ENCODE measurements at regions of chr2 and their contacts with region 1.

Region 1: GRCh38 chr2:201118121-201118960 is 2.4 kb downstream of the CFLAR start:
- DNase-seq: peak; percentile 90
- H3K4me3 Mint-ChIP-seq: peak overlapping the region; percentile 96
- H3K27ac Mint-ChIP-seq: peak overlapping the region; percentile 98
- H3K4me1 Mint-ChIP-seq: peaks cover 50% of the 10 kb centered on the region
- H3K27me3 Mint-ChIP-seq: no peaks in the 10 kb centered on the region

Region 2: GRCh38 chr2:200963124-200963917 is 155.0 kb before region 1 on chr2 and contains the start of gene ORC2:
- CTCF ChIA-PET with region 1: interaction called, 7 read pairs
- POLR2A ChIA-PET with region 1: interaction called, 32 read pairs
- DNase-seq: peak; percentile 93
- H3K4me3 Mint-ChIP-seq: peak within 1 kb of the TSS; percentile 92
- H3K27ac Mint-ChIP-seq: peak within 1 kb of the TSS; percentile 86
- H3K4me1 Mint-ChIP-seq: peaks cover 72% of the 10 kb centered on the region
- H3K27me3 Mint-ChIP-seq: no peaks in the 10 kb centered on the region
- total RNA-seq, gene ORC2: 50.8 to 51.6 TPM

Region 3: GRCh38 chr2:201107624-201108023 is 10.7 kb before region 1 on chr2:
- CTCF ChIA-PET with region 1: interaction called, 6 read pairs
- POLR2A ChIA-PET with region 1: interaction called, 10 read pairs
- DNase-seq: no peak
- H3K4me3 Mint-ChIP-seq: no peak overlapping the region
- H3K27ac Mint-ChIP-seq: no peak overlapping the region
- H3K4me1 Mint-ChIP-seq: peaks cover 5% of the 10 kb centered on the region
- H3K27me3 Mint-ChIP-seq: peaks cover 4% of the 10 kb centered on the region

Region 4: DNA sequence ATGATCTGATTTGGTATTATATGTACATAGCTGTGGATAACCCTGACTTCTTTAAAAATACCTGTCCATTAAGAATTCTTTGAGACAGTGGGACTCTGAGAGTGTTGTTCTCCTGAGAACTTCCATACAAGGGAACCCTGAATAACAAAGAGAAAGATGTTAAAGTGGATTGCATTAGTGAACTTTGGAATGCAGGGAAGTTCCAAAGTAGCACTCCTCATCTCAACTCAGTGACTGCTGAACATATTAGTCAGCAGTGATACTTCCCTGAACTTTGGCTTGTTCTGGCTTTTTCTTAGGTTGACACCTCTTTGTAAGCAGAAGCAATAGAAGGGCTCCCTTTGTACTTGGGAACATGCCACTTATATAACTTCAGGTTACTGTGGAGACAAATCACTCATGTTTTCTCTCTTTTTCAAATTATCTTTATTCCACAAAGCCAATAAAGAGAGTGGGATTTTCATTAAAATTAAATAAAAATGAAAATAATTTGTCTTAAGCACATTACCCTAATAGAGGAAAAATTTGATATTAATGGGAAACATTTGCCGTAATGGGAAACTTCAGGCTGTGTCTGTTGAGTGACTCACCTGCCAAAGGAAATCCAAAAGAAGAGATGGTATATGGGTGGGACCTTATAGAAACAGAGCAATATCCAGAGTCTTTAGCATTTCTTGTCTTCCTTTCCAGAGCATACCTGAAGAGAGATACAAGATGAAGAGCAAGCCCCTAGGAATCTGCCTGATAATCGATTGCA is 30.9 kb after region 1 on chr2:
- CTCF ChIA-PET with region 1: interaction called, 5 read pairs
- POLR2A ChIA-PET with region 1: interaction called, 32 read pairs
- DNase-seq: no peak
- H3K4me3 Mint-ChIP-seq: no peak overlapping the region
- H3K27ac Mint-ChIP-seq: peak overlapping the region; percentile 38
- H3K4me1 Mint-ChIP-seq: peaks cover 31% of the 10 kb centered on the region
- H3K27me3 Mint-ChIP-seq: no peaks in the 10 kb centered on the region

Region 5: DNA sequence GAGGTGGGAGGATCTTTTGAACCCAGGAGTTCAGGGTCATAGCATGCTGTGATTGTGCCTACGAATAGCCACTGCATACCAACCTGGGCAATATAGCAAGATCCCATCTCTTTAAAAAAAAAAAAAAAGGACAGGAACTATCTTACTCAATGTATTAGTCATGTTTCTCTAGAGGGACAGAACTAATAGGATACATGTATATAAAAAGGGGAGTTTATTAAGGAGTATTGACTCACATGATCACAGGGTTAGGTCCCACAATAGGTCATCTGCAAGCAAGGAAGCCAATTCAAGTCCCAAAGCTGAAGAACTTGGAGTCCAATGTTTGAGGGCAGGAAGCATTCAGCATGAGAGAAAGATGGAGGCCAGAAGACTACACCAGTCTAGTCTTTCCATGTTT is 45.8 kb after region 1 on chr2:
- CTCF ChIA-PET with region 1: interaction called, 47 read pairs
- POLR2A ChIA-PET with region 1: interaction called, 36 read pairs
- DNase-seq: no peak
- H3K4me3 Mint-ChIP-seq: no peak overlapping the region
- H3K27ac Mint-ChIP-seq: no peak overlapping the region
- H3K4me1 Mint-ChIP-seq: no peaks in the 10 kb centered on the region
- H3K27me3 Mint-ChIP-seq: peaks cover 2% of the 10 kb centered on the region

Region 6: DNA sequence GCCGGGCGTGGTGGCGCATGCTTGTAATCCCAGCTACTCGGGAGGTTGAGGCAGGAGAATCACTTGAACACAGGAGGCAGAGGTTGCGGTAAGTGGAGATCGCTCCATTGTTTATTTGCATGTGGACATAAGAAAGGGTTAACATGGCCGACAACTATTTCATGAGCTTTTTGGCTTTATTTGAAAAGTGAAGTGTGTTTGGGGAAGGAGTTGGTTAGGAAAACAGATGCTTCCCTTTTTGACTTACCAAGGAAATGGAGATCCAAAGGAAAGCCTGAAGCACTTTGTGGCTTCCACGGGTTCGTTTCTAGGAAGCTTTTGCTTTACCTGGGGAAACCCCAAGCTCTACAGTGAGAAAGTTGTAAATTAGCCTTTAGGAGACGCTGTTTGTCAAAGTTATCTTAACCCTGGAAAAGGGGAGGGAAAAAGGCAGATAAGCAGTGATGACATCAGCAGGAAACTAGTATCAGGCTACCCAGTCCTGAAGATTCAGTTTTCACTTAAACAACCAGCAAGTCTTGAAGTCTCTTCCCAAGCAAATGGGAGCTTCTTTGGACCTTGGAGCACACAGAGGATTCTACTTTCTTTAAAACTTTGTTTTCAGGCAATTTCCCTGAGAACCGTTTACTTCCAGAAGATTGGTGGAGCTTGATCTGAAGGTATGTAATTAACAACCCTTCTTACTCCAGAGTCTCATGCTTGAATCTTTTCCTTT is 64.5 kb after region 1 on chr2 and contains the start of gene CASP10:
- CTCF ChIA-PET with region 1: interaction called, 8 read pairs
- POLR2A ChIA-PET with region 1: interaction called, 31 read pairs
- DNase-seq: no peak
- H3K4me3 Mint-ChIP-seq: peak within 1 kb of the TSS; percentile 98
- H3K27ac Mint-ChIP-seq: peak within 1 kb of the TSS; percentile 84
- H3K4me1 Mint-ChIP-seq: peaks cover 57% of the 10 kb centered on the region
- H3K27me3 Mint-ChIP-seq: no peaks in the 10 kb centered on the region
- total RNA-seq, gene CASP10: 47.8 to 51.3 TPM

Measured in activated CD4-positive, alpha-beta memory T cell treated with anti-CD3 and anti-CD28 coated beads, Interleukin-2, amount 10 ng/mL, durations not matched to agents 7 days and 5 days (primary cell).